MCF 10A (cell line): ENCODE measurements at regions of chr16 and their contacts with region 1.

Region 1: GRCh38 chr16:23435500-23435899 is 17.5 kb downstream of the COG7 start:
- DNase-seq: peak; percentile 71
- H3K4me3 Mint-ChIP-seq: no peak overlapping the region
- H3K27ac Mint-ChIP-seq: no peak overlapping the region
- H3K4me1 Mint-ChIP-seq: no peaks in the 10 kb centered on the region
- H3K27me3 Mint-ChIP-seq: no peaks in the 10 kb centered on the region
- CTCF ChIP-seq: peak; percentile 88

Region 2: DNA sequence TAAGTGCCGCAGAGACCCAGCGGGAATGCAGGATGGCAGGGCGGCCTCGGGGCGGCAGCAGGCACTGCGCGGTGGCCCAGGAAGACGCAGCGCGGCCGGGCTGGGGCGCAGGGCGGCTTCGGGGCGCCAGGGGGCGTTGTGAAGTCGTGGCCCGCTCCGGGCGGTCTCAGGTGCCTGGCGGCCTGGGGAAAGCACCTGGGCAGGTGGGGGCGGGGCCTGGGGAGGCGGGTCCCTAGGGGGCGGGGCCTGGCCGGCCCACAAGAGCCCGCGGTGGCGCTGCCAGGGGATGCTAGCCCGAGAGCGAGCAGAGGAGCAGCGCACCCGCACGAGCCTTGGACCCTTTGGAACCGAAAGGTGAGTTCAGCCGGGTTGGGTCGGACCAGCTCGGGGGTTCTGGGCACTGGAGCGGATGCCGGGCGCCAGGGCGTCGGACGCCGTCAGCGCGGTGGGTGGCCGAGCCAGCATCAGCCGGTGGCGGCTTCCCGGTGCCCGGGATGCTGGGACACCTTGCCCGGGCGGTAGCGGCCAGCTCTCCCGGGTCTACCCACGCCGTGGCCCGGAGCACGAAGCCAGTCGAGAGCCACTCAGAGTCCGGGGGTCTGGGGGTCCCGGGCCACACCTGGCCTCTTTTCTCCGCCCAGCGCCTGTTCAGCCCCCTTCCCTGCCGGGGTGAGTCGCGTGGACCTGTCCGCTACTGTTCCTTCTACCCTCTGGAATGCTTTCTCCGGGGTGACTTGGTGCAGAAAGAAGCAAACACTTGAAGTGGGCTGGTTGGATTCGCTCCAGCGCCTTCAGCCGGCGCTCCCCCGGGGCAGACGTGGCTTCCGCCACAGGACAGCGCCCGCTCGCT is 252.8 kb before region 1 on chr16 and contains the start of gene SCNN1G:
- CTCF ChIA-PET with region 1: interaction called, 516 read pairs
- POLR2A ChIA-PET with region 1: interaction called, 66 read pairs
- intact Hi-C with region 1: loop called (anchors 1 kb)
- DNase-seq: peak; percentile 89
- H3K4me3 Mint-ChIP-seq: peak within 1 kb of the TSS; percentile 84
- H3K27ac Mint-ChIP-seq: peak within 1 kb of the TSS; percentile 35
- H3K4me1 Mint-ChIP-seq: peaks cover 24% of the 10 kb centered on the region
- H3K27me3 Mint-ChIP-seq: no peaks in the 10 kb centered on the region
- CTCF ChIP-seq: peak; percentile 99
- total RNA-seq, gene SCNN1G: 7.9 and 11.9 TPM in 2 replicates

Region 3: DNA sequence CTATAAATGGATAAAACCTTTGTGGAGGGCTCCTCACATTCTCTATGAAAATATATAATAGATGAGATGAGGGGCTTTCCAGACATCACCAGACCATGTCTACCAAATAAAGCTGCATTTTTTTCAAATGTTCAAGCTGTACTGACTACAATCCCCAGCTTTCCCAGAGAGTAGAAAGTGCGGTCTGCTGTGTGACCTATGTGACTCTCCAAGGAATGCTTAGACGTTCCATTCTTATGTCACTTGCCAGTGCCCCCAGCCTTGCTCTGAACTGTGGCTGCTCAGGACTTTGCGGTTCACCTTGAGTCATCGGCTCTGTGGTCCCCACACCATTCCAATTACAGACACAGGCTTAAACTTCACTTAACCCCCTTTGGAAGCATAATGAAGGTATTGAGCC is 181.2 kb before region 1 on chr16:
- CTCF ChIA-PET with region 1: interaction called, 32 read pairs
- POLR2A ChIA-PET with region 1: interaction called, 17 read pairs
- intact Hi-C with region 1: no loop called
- DNase-seq: peak; percentile 75
- H3K4me3 Mint-ChIP-seq: no peak overlapping the region
- H3K27ac Mint-ChIP-seq: peak overlapping the region; percentile 82
- H3K4me1 Mint-ChIP-seq: peaks cover 40% of the 10 kb centered on the region
- H3K27me3 Mint-ChIP-seq: no peaks in the 10 kb centered on the region
- CTCF ChIP-seq: no peak

Region 4: DNA sequence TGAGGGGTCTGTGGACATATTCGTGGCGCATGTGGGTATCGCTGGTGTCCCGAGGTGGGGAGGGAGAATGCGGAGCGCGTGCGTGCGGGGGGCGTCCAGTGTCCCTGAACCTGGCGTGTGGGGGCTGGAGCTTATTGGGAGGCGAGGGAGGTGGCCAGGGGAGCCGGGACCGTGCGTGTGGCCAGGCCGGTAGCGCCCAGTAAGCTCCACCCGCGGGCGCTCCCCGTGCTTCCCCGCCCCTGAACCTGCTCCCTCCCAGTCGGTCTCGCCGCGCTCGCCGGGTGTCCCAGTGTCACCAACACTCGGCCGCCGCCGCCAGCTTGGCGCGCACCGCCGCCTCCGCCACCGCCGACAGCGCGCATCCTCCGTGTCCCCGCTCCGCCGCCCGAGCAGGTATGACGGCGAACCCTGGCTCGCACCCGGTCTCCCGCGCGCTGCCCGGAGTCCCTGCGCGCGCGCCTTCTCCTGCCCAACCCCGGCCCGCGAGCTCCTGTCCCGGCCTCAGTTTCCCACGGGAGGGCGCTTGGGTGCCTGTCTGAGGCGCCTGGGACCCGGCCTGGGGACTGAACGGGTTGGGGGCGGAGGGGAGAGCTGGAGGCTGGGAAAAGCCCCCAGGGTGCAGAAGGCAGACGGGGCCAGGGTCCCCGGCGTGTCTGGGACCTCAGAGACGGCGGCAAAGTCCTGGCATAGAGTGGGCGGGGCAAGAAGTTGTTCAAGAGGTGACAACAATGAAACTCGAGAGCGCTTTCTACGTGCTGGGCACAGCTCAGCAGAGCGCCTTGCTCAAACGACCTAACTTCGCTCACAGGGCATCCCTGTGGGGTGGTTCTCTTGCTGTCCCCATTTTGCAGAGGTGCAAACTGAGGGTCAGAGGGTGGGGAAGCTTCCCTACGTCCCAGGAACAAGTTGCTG is 133.2 kb before region 1 on chr16 and contains the start of gene SCNN1B:
- CTCF ChIA-PET with region 1: interaction called, 23 read pairs
- POLR2A ChIA-PET with region 1: interaction called, 3 read pairs
- intact Hi-C with region 1: loop called (anchors 10 kb)
- DNase-seq: no peak
- H3K4me3 Mint-ChIP-seq: peak within 1 kb of the TSS; percentile 74
- H3K27ac Mint-ChIP-seq: no peak within 1 kb of the TSS
- H3K4me1 Mint-ChIP-seq: peaks cover 20% of the 10 kb centered on the region
- H3K27me3 Mint-ChIP-seq: no peaks in the 10 kb centered on the region
- CTCF ChIP-seq: no peak
- total RNA-seq, gene SCNN1B: 9.5 and 12.5 TPM in 2 replicates

Region 5: DNA sequence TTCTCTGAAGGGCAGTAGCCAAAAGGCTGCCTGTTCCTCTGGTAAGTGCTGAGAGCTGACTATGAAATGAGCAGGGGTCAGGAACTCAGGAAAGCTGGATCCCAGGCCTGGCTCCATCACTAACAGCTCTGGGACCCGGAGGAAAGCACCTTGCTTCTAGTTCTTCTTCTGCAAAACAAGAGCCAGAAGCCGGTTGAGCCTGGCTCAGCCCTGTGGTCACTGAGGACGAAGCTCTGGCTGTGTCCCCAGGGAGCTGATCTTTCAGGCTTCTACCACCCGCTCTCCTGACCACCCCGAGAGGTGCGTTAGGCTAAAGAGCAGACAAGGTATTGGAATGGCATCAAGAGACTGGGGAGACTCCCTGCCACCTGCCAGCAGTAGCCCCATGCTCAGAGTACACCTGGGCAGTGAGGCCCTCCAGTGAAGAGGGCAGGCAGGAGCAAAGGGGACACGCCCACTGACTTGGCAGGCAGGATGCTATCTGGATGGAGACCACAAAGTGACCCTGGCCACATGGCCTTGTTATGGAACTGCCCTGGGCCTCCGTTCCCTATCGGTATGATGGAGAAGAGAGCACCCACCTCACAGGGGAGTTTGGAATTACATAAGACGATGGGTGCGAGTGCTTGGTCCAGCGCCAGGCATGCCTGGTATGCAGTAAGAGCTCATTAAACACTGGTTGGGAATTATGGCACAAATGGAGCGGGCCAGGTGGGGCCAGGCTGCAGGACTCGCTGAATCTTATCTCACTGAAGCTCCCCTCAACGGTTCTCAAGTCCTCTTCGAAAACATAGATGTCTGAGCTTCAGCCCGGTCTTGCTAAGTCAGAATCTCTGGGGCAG is 43.9 kb before region 1 on chr16:
- CTCF ChIA-PET with region 1: interaction called, 50 read pairs
- POLR2A ChIA-PET with region 1: interaction called, 3 read pairs
- intact Hi-C with region 1: no loop called
- DNase-seq: peak; percentile 29
- H3K4me3 Mint-ChIP-seq: no peak overlapping the region
- H3K27ac Mint-ChIP-seq: peak overlapping the region; percentile 92
- H3K4me1 Mint-ChIP-seq: peaks cover 36% of the 10 kb centered on the region
- H3K27me3 Mint-ChIP-seq: no peaks in the 10 kb centered on the region
- CTCF ChIP-seq: no peak

Region 6: GRCh38 chr16:23452572-23453337 is 17.3 kb after region 1 on chr16 and contains the start of gene COG7:
- CTCF ChIA-PET with region 1: interaction called, 82 read pairs
- POLR2A ChIA-PET with region 1: no interaction called
- intact Hi-C with region 1: no loop called
- DNase-seq: peak; percentile 82
- H3K4me3 Mint-ChIP-seq: peak within 1 kb of the TSS; percentile 90
- H3K27ac Mint-ChIP-seq: peak within 1 kb of the TSS; percentile 89
- H3K4me1 Mint-ChIP-seq: peaks cover 14% of the 10 kb centered on the region
- H3K27me3 Mint-ChIP-seq: no peaks in the 10 kb centered on the region
- CTCF ChIP-seq: no peak
- total RNA-seq, gene COG7: 10.0 and 16.7 TPM in 2 replicates